ENCODE measurements at regions of chr13 and their contacts with region 1.

Region 1: GRCh38 chr13:33205804-33206221 is 79.7 kb downstream of the STARD13 start:
- DNase-seq: no peak
- ATAC-seq: no peak
- H3K4me3 ChIP-seq: no peak overlapping the region
- H3K27ac ChIP-seq: no peak overlapping the region
- H3K4me1 ChIP-seq: peaks cover 33% of the 10 kb centered on the region
- H3K27me3 ChIP-seq: no peaks in the 10 kb centered on the region
- CTCF ChIP-seq: no peak
- EP300 ChIP-seq: no peak
- POLR2A ChIP-seq: no peak
- RAD21 ChIP-seq: no peak

Region 2: DNA sequence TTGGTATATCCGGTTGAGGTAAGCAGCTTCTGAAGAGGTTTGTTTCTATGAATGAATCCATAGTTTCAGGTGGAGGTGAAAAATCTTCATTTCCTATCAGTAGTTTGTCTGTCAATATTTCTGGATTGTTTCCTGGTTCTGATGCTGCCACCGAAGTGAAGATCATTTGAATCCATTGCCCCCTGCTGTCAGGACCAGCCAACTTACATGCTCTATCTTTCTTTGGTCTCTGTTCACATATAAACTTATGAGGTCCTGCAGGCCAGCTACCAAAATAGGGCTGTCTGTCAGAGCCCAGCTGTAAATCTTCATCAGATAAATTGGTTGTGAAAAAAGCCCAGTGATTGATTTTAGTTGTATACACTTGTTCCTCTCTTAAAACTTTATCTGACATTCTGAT is 762.7 kb before region 1 on chr13:
- CTCF ChIA-PET with region 1: no interaction called
- POLR2A ChIA-PET with region 1: no interaction called
- in situ Hi-C with region 1: no loop called
- intact Hi-C with region 1: no loop called
- DNase-seq: peak; percentile 69
- ATAC-seq: peak; percentile 71
- H3K4me3 ChIP-seq: no peak overlapping the region
- H3K27ac ChIP-seq: no peak overlapping the region
- H3K4me1 ChIP-seq: peaks cover 56% of the 10 kb centered on the region
- H3K27me3 ChIP-seq: no peaks in the 10 kb centered on the region
- CTCF ChIP-seq: peak; percentile 70
- EP300 ChIP-seq: no peak
- POLR2A ChIP-seq: no peak
- RAD21 ChIP-seq: peak; percentile 62; the same call in 1 of the 2 replicates

Region 3: DNA sequence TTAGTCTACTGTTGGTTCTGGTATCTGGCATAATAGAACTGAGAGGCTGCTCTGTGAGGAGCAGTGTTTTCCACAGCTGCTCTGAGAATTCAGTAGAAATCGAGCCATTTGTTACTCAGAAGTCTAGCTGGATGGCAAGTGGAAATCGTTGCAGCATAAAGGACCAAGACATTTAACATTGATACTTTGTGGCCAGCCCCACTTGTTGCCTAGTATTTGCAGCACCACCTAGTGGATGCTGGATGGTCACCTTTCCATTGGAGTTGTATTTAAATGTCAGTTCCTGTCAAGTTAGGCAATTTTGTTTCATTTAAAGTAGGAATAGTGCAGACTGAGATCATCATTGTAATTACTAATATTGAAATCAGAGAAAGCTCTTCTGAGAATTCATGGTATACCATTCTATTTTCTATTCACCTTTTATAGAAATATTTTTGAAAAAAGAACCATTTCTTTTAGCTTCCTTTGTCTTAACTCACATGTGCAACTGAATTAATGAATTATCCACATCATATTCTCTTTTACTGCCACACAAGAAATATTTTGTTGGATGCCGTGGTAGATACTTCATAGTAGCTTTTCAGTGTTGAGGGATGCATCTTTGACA is 555.0 kb before region 1 on chr13:
- CTCF ChIA-PET with region 1: no interaction called
- POLR2A ChIA-PET with region 1: no interaction called
- in situ Hi-C with region 1: no loop called
- intact Hi-C with region 1: loop called (anchors 5 kb)
- DNase-seq: peak; percentile 73
- ATAC-seq: peak; percentile 92
- H3K4me3 ChIP-seq: no peak overlapping the region
- H3K27ac ChIP-seq: no peak overlapping the region
- H3K4me1 ChIP-seq: peaks cover 8% of the 10 kb centered on the region; the same call in 1 of the 2 replicates
- H3K27me3 ChIP-seq: no peaks in the 10 kb centered on the region
- CTCF ChIP-seq: peak; percentile 83
- EP300 ChIP-seq: no peak
- POLR2A ChIP-seq: no peak
- RAD21 ChIP-seq: peak; percentile 21; the same call in 1 of the 2 replicates

Region 4: DNA sequence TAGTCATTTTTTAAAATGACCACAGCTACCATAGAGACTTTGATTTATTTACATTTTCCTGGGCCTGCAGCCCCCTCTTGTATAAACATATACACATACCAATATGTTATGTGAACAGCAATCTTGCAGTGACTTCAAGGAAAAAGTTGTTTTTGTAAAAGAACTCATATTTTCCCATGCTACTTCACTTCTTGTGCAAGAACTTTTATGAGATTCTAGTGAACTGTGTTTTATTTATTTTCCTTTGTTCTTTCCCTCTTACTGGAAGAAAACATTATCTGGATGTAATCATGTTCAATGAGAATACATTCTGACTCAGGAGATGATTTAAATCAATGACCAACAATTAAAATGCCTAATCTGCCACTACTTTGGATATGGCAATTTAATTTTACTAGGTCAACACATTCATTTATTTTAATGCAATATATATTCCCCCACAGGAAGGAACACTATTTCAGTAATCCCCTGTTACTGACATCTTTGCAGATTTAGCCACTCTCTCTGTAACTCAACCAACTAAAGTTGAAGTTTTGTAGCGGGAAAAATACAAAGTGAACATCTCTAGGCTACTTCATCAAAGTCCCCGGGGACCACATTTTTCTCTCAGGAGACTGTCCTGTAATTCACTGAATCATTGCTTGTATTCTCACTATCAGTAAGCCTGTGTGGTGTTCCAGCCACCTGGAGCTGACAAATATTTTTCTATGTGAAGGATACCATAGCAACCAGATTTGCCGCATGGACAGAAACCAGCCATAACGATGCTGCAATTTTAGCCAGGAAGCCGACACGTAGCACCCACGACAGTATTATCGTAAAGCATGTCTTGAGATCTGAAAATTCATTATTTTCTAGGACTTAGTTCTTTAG is 10.8 kb before region 1 on chr13:
- CTCF ChIA-PET with region 1: no interaction called
- POLR2A ChIA-PET with region 1: no interaction called
- in situ Hi-C with region 1: no loop called
- intact Hi-C with region 1: no loop called
- DNase-seq: peak; percentile 73
- ATAC-seq: peak; percentile 70
- H3K4me3 ChIP-seq: no peak overlapping the region; a peak in 1 of 6 replicates
- H3K27ac ChIP-seq: peak overlapping the region; percentile 56
- H3K4me1 ChIP-seq: peaks cover 49% of the 10 kb centered on the region
- H3K27me3 ChIP-seq: no peaks in the 10 kb centered on the region
- CTCF ChIP-seq: no peak
- EP300 ChIP-seq: peak in 1 of 2 experiments; percentile 52; a peak in 1 of 4 replicates
- POLR2A ChIP-seq: no peak
- RAD21 ChIP-seq: no peak

Region 5: DNA sequence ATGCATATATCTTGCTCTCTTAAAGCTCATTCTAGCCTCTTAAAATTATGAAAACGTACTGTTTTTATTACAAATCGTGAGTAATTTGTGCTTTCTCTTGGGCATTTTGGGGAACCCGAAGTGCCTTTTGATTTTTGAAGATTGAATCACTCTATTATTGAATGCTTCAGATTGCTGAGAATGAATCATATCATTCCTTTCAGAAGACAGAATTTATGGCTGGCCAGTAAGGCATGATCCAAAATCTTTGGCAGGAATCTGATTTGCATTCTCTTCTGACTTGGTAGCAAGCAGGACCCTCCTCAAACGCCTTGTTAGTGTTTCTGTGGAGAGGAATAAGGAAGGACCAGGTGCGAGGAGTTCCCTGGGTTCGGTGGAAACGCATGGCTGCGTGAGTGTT is 30.2 kb after region 1 on chr13:
- CTCF ChIA-PET with region 1: no interaction called
- POLR2A ChIA-PET with region 1: no interaction called
- in situ Hi-C with region 1: no loop called
- intact Hi-C with region 1: no loop called
- DNase-seq: no peak
- ATAC-seq: no peak
- H3K4me3 ChIP-seq: no peak overlapping the region
- H3K27ac ChIP-seq: no peak overlapping the region
- H3K4me1 ChIP-seq: peaks cover 29% of the 10 kb centered on the region
- H3K27me3 ChIP-seq: no peaks in the 10 kb centered on the region
- CTCF ChIP-seq: no peak
- EP300 ChIP-seq: no peak
- POLR2A ChIP-seq: no peak
- RAD21 ChIP-seq: no peak